ENCODE measurements at regions of chr21 and their contacts with region 1.

Region 1: GRCh38 chr21:31781737-31782136 is 49.8 kb upstream of the SCAF4 start:
- DNase-seq: no peak
- ATAC-seq: no peak
- H3K4me3 Mint-ChIP-seq: no peak overlapping the region
- H3K27ac Mint-ChIP-seq: no peak overlapping the region
- H3K4me1 Mint-ChIP-seq: no peaks in the 10 kb centered on the region
- H3K27me3 Mint-ChIP-seq: no peaks in the 10 kb centered on the region
- CTCF ChIP-seq: no peak

Region 2: GRCh38 chr21:31798842-31799704 is 17.3 kb after region 1 on chr21:
- CTCF ChIA-PET with region 1: interaction called, 13 read pairs
- POLR2A ChIA-PET with region 1: no interaction called
- DNase-seq: no peak
- ATAC-seq: no peak
- H3K4me3 Mint-ChIP-seq: no peak overlapping the region
- H3K27ac Mint-ChIP-seq: no peak overlapping the region
- H3K4me1 Mint-ChIP-seq: peaks cover 21% of the 10 kb centered on the region
- H3K27me3 Mint-ChIP-seq: no peaks in the 10 kb centered on the region
- CTCF ChIP-seq: no peak

Region 3: GRCh38 chr21:31845151-31845729 is 63.5 kb after region 1 on chr21:
- CTCF ChIA-PET with region 1: interaction called, 10 read pairs
- POLR2A ChIA-PET with region 1: no interaction called
- DNase-seq: no peak
- ATAC-seq: peak; percentile 81
- H3K4me3 Mint-ChIP-seq: no peak overlapping the region
- H3K27ac Mint-ChIP-seq: no peak overlapping the region
- H3K4me1 Mint-ChIP-seq: peaks cover 11% of the 10 kb centered on the region
- H3K27me3 Mint-ChIP-seq: no peaks in the 10 kb centered on the region; the same call in 1 of the 2 replicates
- CTCF ChIP-seq: no peak

Region 4: GRCh38 chr21:31873696-31874599 is 92.2 kb after region 1 on chr21:
- CTCF ChIA-PET with region 1: interaction called, 22 read pairs
- POLR2A ChIA-PET with region 1: no interaction called
- DNase-seq: peak; percentile 74
- ATAC-seq: peak; percentile 18
- H3K4me3 Mint-ChIP-seq: peak overlapping the region; percentile 63
- H3K27ac Mint-ChIP-seq: no peak overlapping the region
- H3K4me1 Mint-ChIP-seq: peaks cover 44% of the 10 kb centered on the region
- H3K27me3 Mint-ChIP-seq: peaks cover 43% of the 10 kb centered on the region
- CTCF ChIP-seq: peak; percentile 65

Region 5: GRCh38 chr21:32257962-32258785 is 476.4 kb after region 1 on chr21:
- CTCF ChIA-PET with region 1: interaction called, 22 read pairs
- POLR2A ChIA-PET with region 1: no interaction called
- DNase-seq: peak; percentile 73
- ATAC-seq: peak; percentile 91
- H3K4me3 Mint-ChIP-seq: no peak overlapping the region
- H3K27ac Mint-ChIP-seq: no peak overlapping the region
- H3K4me1 Mint-ChIP-seq: peaks cover 5% of the 10 kb centered on the region
- H3K27me3 Mint-ChIP-seq: no peaks in the 10 kb centered on the region
- CTCF ChIP-seq: peak; percentile 66

Measured in WTC11 (cell line).